HCT116 (cell line): ENCODE measurements at regions of chr19 and their contacts with region 1.

Region 1: GRCh38 chr19:48363810-48364563 is at the starts of genes SYNGR4 and TMEM143:
- DNase-seq: peak; percentile 99
- ATAC-seq: peak; percentile 84
- H3K4me3 ChIP-seq: peak within 1 kb of the TSS; percentile 62 to 69
- H3K27ac ChIP-seq: peak within 1 kb of the TSS; percentile 86
- H3K4me1 ChIP-seq: peaks cover 5 to 24% of the 10 kb centered on the region in 2 experiments
- H3K27me3 ChIP-seq: no peaks in the 10 kb centered on the region
- CTCF ChIP-seq: no peak
- POLR2A ChIP-seq: peak; percentile 36
- RAD21 ChIP-seq: no peak
- total RNA-seq, gene SYNGR4: 0.49 TPM
- total RNA-seq, gene TMEM143: 13.2 TPM

Region 2: GRCh38 chr19:46478356-46478986 is 1885.5 kb before region 1 on chr19:
- CTCF ChIA-PET with region 1: no interaction called
- POLR2A ChIA-PET with region 1: no interaction called
- RAD21 ChIA-PET with region 1: no interaction called
- intact Hi-C with region 1: no loop called
- DNase-seq: no peak
- ATAC-seq: no peak
- H3K4me3 ChIP-seq: no peak overlapping the region
- H3K27ac ChIP-seq: no peak overlapping the region
- H3K4me1 ChIP-seq: no peaks in the 10 kb centered on the region
- H3K27me3 ChIP-seq: no peaks in the 10 kb centered on the region; the same call in 1 of the 2 replicates
- CTCF ChIP-seq: no peak
- POLR2A ChIP-seq: no peak
- RAD21 ChIP-seq: no peak

Region 3: DNA sequence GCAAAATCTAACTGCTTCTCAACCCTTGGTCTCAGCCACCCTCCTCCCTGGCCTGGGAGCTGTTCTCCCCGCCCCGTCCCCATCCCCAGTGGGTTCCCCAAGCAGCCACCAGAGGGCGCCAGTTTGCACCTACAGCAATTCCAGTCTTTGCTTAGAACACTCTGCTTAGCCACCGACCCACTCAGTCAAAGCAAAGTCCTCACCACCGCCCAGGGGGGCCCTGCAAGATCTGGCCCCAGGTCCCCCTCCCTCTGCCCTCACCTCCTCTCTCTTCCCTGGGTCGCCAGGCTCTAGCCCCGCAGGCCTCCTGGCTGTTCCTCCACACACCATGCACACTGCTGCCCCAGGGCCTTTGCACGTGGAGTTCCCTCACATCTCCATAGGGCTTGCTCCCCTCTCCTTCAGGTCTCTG is 12.6 kb before region 1 on chr19:
- CTCF ChIA-PET with region 1: interaction called, 10 read pairs
- POLR2A ChIA-PET with region 1: interaction called, 30 read pairs
- RAD21 ChIA-PET with region 1: interaction called in 1 of 2 experiments, 7 read pairs
- intact Hi-C with region 1: no loop called
- DNase-seq: no peak
- ATAC-seq: peak; percentile 67
- H3K4me3 ChIP-seq: no peak overlapping the region
- H3K27ac ChIP-seq: no peak overlapping the region
- H3K4me1 ChIP-seq: peaks cover 22 to 46% of the 10 kb centered on the region in 2 experiments
- H3K27me3 ChIP-seq: no peaks in the 10 kb centered on the region
- CTCF ChIP-seq: peak; percentile 75 to 96 (median 95); a peak in 5 of 6 replicates
- POLR2A ChIP-seq: no peak
- RAD21 ChIP-seq: peak; percentile 80

Region 4: DNA sequence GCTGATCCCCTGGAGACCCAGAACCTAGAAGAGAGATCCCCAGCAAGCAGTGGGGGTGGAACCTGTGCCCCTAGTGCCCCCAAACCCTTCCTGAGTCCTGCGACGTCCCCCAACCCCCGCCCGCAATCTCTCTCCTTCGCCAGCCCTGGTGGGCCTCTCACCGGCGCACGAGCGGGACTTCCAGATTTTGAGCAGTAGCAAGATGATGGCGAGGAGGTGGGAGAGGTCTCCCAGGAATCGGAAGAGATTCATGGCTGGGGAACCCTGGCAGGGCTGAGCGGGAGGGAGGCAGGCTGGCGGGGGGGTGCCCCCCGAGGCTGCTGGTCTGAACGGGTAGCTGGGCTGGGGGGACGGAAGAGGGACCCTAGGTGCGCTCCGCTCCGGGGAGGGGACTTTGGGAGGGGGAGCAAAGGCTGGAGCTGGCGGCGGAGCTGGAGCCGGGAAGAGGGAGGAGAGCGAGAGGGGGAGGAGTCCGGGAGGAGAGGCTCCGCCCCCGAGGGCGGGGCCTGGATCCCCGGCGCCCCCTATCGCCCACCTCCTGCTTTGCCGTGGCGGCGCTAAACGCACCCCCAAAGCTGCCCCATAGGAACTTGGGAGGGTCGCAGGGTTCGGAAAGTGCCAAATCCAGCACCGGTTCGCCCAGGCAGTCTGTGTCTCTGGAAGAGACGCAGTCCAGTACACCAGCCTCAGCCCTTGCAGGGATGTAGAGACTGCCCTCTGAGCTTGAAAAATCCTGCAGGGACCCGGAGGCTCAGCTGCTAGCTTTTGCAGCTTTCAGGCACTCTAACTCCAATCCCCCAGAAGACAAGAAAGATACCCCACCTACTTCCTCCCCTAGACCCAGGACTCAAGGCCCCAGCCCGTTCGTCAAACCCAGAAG is 27.4 kb after region 1 on chr19 and contains the start of gene KDELR1:
- CTCF ChIA-PET with region 1: interaction called, 16 read pairs
- POLR2A ChIA-PET with region 1: interaction called, 3 read pairs
- RAD21 ChIA-PET with region 1: interaction called in 1 of 2 experiments, 4 read pairs
- intact Hi-C with region 1: loop called (anchors 5 kb)
- DNase-seq: no peak
- ATAC-seq: peak; percentile 80
- H3K4me3 ChIP-seq: peak within 1 kb of the TSS; percentile 82 to 96
- H3K27ac ChIP-seq: peak within 1 kb of the TSS; percentile 80
- H3K4me1 ChIP-seq: peaks cover 9 to 52% of the 10 kb centered on the region in 2 experiments
- H3K27me3 ChIP-seq: no peaks in the 10 kb centered on the region
- CTCF ChIP-seq: peak in 2 of 3 experiments; percentile 81 to 95; a peak in 5 of 6 replicates
- POLR2A ChIP-seq: no peak
- RAD21 ChIP-seq: no peak
- total RNA-seq, gene KDELR1: 212 TPM

Region 5: DNA sequence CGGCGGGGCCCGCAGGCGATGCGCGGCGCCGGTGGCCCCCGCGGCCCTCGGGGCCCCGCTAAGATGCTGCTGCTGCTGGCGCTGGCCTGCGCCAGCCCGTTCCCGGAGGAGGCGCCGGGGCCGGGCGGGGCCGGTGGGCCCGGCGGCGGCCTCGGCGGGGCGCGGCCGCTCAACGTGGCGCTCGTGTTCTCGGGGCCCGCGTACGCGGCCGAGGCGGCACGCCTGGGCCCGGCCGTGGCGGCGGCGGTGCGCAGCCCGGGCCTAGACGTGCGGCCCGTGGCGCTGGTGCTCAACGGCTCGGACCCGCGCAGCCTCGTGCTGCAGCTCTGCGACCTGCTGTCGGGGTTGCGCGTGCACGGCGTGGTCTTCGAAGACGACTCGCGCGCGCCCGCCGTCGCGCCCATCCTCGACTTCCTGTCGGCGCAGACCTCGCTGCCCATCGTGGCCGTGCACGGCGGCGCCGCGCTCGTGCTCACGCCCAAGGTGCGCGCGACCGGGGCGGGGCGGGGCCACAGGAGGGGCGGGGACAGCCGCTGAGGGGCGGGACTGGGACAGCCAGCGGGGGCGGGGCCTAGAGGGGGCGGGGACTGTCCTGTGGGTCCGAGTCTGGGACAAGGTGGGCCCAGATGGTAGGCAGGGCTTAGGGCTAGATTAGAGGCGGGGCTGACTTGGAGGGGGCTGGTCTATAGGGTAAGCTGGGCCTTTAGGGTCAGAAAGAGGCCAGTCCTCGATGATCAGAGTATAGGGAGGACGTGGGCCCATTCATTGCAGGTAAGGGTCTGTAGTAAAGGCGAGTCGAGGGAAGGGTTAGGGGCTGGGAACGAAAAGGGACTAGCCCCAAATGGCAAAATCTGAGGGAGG is 34.6 kb after region 1 on chr19:
- CTCF ChIA-PET with region 1: interaction called, 6 read pairs
- POLR2A ChIA-PET with region 1: interaction called, 10 read pairs
- RAD21 ChIA-PET with region 1: interaction called in 1 of 2 experiments, 8 read pairs
- intact Hi-C with region 1: loop called (anchors 5 kb)
- DNase-seq: peak; percentile 91
- ATAC-seq: peak; percentile 86
- H3K4me3 ChIP-seq: peak overlapping the region; percentile 75 to 87
- H3K27ac ChIP-seq: peak overlapping the region; percentile 96
- H3K4me1 ChIP-seq: peaks cover 22 to 61% of the 10 kb centered on the region in 2 experiments
- H3K27me3 ChIP-seq: no peaks in the 10 kb centered on the region
- CTCF ChIP-seq: no peak
- POLR2A ChIP-seq: peak; percentile 56
- RAD21 ChIP-seq: no peak